GM23248 (cell line): ENCODE measurements at regions of chr14 and their contacts with region 1.

Region 1: GRCh38 chr14:30994681-30995620 is 30.5 kb upstream of the AP4S1 start:
- DNase-seq: peak; percentile 69
- H3K4me3 ChIP-seq: peak overlapping the region; percentile 25
- H3K27ac ChIP-seq: peak overlapping the region; percentile 83
- H3K4me1 ChIP-seq: peaks cover 17% of the 10 kb centered on the region
- H3K27me3 ChIP-seq: no peaks in the 10 kb centered on the region

Region 2: GRCh38 chr14:30558675-30559555 is 436.0 kb before region 1 on chr14 and contains the start of gene G2E3:
- in situ Hi-C with region 1: no loop called
- DNase-seq: peak; percentile 95
- H3K4me3 ChIP-seq: peak within 1 kb of the TSS; percentile 88
- H3K27ac ChIP-seq: peak within 1 kb of the TSS; percentile 85
- H3K4me1 ChIP-seq: peaks cover 21% of the 10 kb centered on the region
- H3K27me3 ChIP-seq: no peaks in the 10 kb centered on the region
- total RNA-seq, gene G2E3: 11.2 and 12.6 TPM in 2 replicates

Region 3: GRCh38 chr14:31275731-31276130 is 280.8 kb after region 1 on chr14:
- in situ Hi-C with region 1: no loop called
- DNase-seq: no peak
- H3K4me3 ChIP-seq: no peak overlapping the region
- H3K27ac ChIP-seq: no peak overlapping the region
- H3K4me1 ChIP-seq: peaks cover 12% of the 10 kb centered on the region
- H3K27me3 ChIP-seq: no peaks in the 10 kb centered on the region

Region 4: GRCh38 chr14:31326111-31326510 is 331.2 kb after region 1 on chr14:
- in situ Hi-C with region 1: loop called (anchors 25 kb)
- DNase-seq: peak; percentile 2
- H3K4me3 ChIP-seq: no peak overlapping the region
- H3K27ac ChIP-seq: no peak overlapping the region
- H3K4me1 ChIP-seq: no peaks in the 10 kb centered on the region
- H3K27me3 ChIP-seq: no peaks in the 10 kb centered on the region